Activated naive CD8-positive, alpha-beta T cell treated with anti-CD3 and anti-CD28 coated beads, Interleukin-2, amount 10 ng/mL, durations not matched to agents 7 days and 5 days (primary cell): ENCODE measurements at regions of chr2 and their contacts with region 1.

Region 1: GRCh38 chr2:161954103-161954502 is 119.9 kb downstream of the DPP4 start:
- DNase-seq: no peak
- ATAC-seq: peak; percentile 13
- H3K4me3 Mint-ChIP-seq: peak overlapping the region; percentile 34
- H3K27ac Mint-ChIP-seq: peak overlapping the region; percentile 84
- H3K4me1 Mint-ChIP-seq: peaks cover 61% of the 10 kb centered on the region
- H3K27me3 Mint-ChIP-seq: no peaks in the 10 kb centered on the region

Region 2: GRCh38 chr2:161992526-161992925 is 38.4 kb after region 1 on chr2:
- POLR2A ChIA-PET with region 1: interaction called, 111 read pairs
- DNase-seq: peak; percentile 50
- ATAC-seq: peak; percentile 87
- H3K4me3 Mint-ChIP-seq: peak overlapping the region; percentile 79
- H3K27ac Mint-ChIP-seq: peak overlapping the region; percentile 94
- H3K4me1 Mint-ChIP-seq: peaks cover 64% of the 10 kb centered on the region
- H3K27me3 Mint-ChIP-seq: no peaks in the 10 kb centered on the region

Region 3: GRCh38 chr2:162013514-162014475 is 59.7 kb after region 1 on chr2:
- POLR2A ChIA-PET with region 1: interaction called, 16 read pairs
- DNase-seq: no peak
- ATAC-seq: peak; percentile 30
- H3K4me3 Mint-ChIP-seq: peak overlapping the region; percentile 78
- H3K27ac Mint-ChIP-seq: peak overlapping the region; percentile 96
- H3K4me1 Mint-ChIP-seq: peaks cover 62% of the 10 kb centered on the region
- H3K27me3 Mint-ChIP-seq: no peaks in the 10 kb centered on the region

Region 4: DNA sequence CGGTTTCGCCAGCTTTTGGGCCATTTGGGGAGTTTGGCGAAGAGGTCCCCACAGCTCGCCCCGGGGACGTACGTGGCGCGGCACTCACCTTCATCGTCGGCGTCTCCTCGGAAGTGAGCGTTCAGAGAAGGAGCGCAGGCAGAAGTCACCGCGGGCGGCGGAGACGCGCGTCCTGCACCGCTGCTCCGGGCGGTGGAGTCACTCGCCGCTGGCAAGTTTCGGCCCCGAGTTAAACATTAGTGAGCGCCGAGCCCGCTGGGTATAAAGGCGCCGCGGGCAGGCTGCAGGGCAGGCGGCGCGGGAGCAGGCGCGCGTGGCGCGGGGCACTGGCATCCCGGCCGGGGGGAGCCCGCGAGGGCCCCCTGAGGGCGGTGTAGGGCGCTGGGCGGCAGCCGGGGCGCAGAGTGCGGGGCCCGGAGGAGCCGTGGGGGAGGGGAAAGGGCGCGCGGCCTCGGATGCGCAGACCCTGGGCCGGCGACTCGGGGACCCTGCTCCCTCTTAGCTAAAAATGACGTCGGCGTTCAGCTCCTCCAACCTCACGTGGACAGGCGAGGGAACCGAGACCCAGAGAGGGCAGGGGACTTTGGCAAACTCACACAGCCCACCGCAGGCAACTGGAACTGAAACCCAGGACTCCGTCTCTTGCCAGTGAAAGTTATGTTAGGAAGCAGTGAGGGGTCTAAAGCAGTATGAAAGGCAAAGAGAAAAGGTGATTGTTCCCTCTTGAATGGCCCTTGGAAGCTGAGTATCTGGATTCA is 120.0 kb after region 1 on chr2 and contains the start of gene DPP4:
- POLR2A ChIA-PET with region 1: interaction called, 24 read pairs
- DNase-seq: peak; percentile 79
- ATAC-seq: peak; percentile 85
- H3K4me3 Mint-ChIP-seq: peak within 1 kb of the TSS; percentile 91
- H3K27ac Mint-ChIP-seq: peak within 1 kb of the TSS; percentile 95
- H3K4me1 Mint-ChIP-seq: peaks cover 40% of the 10 kb centered on the region
- H3K27me3 Mint-ChIP-seq: no peaks in the 10 kb centered on the region
- total RNA-seq, gene DPP4: 101 to 107 TPM